Panc1 (cell line): ENCODE measurements at regions of chr17 and their contacts with region 1.

Region 1: DNA sequence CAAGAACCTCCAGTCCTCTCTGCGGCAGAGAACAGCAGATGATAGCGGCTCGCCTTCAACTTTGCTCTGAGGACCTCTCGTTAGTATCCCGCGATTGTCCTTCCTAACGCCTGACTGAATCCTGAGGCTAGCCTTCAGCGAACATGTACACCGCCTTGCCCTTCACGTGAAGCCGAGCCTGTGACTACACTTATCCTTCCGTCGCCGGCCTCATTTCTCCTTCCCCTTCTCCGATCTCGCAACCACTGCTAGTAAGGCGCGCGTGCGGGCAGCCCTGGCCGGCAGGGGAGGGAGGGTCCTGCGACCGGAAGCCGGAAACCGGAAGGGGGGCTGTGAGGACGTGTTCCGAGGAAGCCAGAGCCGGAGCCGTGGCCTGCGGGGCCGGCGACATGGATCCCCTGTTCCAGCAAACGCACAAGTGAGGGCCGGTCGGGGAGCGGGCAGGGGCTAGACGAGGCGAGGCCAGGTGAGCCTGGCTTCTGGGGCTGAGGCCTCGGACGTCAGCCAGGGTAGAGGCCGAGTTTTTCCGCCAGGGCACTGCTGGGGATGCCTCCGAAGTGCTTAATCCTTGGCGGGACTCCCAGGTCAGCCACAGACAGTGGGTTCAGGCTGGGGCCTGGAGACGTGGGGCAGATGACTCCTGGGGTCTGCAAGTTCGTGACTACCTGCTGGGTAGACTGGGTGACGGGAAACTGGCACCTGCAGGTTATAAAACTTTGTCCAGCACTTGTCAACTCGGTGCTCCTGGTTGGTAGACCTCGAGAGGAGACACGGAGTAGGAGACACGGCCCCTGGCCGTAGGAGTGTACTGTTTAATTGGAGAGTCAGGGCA is at the start of gene GOSR2:
- DNase-seq: peak; percentile 77
- ATAC-seq: peak; percentile 99
- H3K4me3 ChIP-seq: peak within 1 kb of the TSS; percentile 86 to 99
- H3K27ac ChIP-seq: peak within 1 kb of the TSS; percentile 87
- H3K4me1 ChIP-seq: peaks cover 5% of the 10 kb centered on the region; the same call in 1 of the 2 replicates
- H3K27me3 ChIP-seq: no peaks in the 10 kb centered on the region
- CTCF ChIP-seq: no peak
- total RNA-seq, gene GOSR2: 36.5 TPM

Region 2: GRCh38 chr17:46841561-46842379 is 81.2 kb before region 1 on chr17:
- CTCF ChIA-PET with region 1: no interaction called
- POLR2A ChIA-PET with region 1: no interaction called
- in situ Hi-C with region 1: no loop called
- intact Hi-C with region 1: loop called (anchors 10 kb)
- DNase-seq: no peak
- ATAC-seq: peak; percentile 86
- H3K4me3 ChIP-seq: peak overlapping the region; percentile 7 to 26; a peak in 3 of 4 replicates
- H3K27ac ChIP-seq: no peak overlapping the region
- H3K4me1 ChIP-seq: no peaks in the 10 kb centered on the region
- H3K27me3 ChIP-seq: peaks cover 3% of the 10 kb centered on the region; the same call in 1 of the 2 replicates
- CTCF ChIP-seq: peak; percentile 94

Region 3: DNA sequence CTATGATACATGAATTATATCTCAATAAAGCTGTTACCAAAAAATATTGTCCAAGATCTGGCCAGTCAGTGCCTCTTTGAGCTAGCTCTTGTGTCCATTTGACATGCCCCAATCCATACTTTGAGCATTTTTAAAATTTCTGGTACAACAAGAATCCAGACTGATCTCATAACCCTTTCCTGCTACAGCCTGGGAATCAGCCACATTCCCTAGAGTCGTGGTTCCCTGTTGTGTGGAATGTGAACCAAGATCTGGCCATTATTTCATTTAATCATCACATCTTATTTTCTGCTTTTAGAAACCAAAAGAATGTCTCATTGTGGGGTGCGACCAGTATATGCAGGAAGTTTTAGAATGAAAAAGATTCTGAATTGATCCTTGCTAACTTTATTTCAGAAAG is 90.3 kb after region 1 on chr17:
- CTCF ChIA-PET with region 1: no interaction called
- POLR2A ChIA-PET with region 1: no interaction called
- in situ Hi-C with region 1: no loop called
- intact Hi-C with region 1: no loop called
- DNase-seq: no peak
- ATAC-seq: no peak
- H3K4me3 ChIP-seq: no peak overlapping the region
- H3K27ac ChIP-seq: no peak overlapping the region
- H3K4me1 ChIP-seq: no peaks in the 10 kb centered on the region
- H3K27me3 ChIP-seq: no peaks in the 10 kb centered on the region
- CTCF ChIP-seq: no peak

Region 4: DNA sequence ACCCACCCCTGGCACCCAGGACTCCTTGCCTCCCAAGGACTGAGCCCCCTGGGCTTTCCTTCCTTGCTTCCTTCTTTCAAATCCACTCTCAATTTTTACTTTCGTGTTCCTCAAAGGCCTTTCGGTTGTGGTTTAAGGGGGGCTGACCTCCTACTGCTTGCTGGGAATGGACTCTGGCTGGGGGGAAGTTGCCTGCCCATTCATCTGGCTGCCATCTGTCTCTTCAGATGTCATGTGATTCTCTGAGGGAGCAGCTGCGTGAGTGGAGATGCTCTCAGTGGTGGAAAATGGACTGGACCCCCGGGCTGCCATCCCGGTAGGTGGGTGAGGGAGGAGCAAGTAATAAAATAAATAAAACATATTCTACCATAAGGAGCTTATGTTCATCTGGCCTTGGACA is 149.9 kb after region 1 on chr17:
- CTCF ChIA-PET with region 1: no interaction called
- POLR2A ChIA-PET with region 1: no interaction called
- in situ Hi-C with region 1: no loop called
- intact Hi-C with region 1: no loop called
- DNase-seq: no peak
- ATAC-seq: no peak
- H3K4me3 ChIP-seq: no peak overlapping the region
- H3K27ac ChIP-seq: no peak overlapping the region
- H3K4me1 ChIP-seq: no peaks in the 10 kb centered on the region
- H3K27me3 ChIP-seq: no peaks in the 10 kb centered on the region
- CTCF ChIP-seq: no peak

Region 5: DNA sequence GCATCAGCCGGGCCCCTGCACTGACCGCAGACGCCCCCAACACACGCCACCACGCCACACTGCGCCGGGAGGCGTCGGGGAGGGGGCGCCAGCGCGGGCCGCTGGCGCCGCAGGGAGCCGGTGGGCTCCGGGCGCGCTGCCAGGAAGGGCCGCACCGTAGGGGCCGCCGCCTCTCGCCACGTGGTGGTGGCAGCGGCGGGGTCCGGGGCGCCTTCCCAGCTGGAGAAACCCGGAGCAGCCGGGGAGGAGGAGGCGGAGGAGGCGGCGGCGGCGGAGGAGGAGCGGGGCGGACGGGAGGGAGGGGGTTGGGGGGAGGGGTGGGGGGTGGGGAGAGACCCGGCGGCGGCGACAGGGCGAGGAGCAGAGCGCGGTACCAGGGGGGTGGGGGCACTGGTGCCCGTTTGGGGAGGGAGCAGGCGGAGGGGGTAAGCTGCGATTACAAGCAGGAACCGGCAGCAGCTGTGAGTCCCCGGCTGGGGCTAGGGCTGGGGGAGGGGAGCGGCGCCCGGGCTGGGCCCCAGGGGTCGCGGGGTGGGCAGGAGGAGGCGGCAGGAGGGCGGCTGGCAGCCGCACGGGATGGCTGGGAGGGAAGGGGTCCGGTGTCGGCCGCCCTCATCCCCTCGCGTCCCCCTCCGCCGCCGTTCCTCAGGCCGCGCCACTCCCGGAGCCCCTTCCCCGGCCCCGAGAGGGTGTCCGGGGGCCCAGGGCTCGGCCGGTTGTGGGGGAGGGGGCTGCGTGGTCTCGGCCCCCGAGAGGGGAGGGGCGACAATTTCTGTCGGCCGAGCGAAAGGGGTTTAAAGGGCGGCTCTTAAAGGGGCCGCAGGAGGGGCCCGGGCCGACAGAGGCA is 770.9 kb after region 1 on chr17 and contains the start of gene TBKBP1:
- CTCF ChIA-PET with region 1: no interaction called
- POLR2A ChIA-PET with region 1: no interaction called
- in situ Hi-C with region 1: no loop called
- intact Hi-C with region 1: no loop called
- DNase-seq: no peak
- ATAC-seq: peak; percentile 38
- H3K4me3 ChIP-seq: peak within 1 kb of the TSS; percentile 59
- H3K27ac ChIP-seq: peak within 1 kb of the TSS; percentile 61
- H3K4me1 ChIP-seq: peaks cover 11% of the 10 kb centered on the region
- H3K27me3 ChIP-seq: no peaks in the 10 kb centered on the region
- CTCF ChIP-seq: no peak
- total RNA-seq, gene TBKBP1: 12.0 TPM